WTC11 (cell line): ENCODE measurements at regions of chr9 and their contacts with region 1.

Region 1: DNA sequence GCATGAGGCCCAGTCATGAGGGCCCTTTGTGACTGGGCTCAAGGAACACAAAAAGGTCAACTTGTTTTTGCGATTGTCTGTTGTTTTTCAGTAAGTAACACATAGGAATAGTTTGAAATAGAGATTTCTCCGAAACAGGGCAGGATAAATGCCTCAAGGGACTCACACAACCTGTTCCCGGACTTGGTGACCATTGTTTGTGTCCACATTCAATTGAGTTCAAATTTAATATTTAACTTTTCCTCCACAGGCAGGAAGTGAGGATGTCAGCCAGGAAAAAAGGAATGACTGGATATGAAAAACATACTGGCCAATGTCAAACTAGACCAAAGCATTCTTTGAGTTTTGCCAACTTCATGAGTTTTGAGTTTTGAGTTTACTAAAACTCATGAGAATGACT is 72.7 kb downstream of the SPATA31C2 start:
- DNase-seq: no peak
- ATAC-seq: no peak
- H3K4me3 Mint-ChIP-seq: no peak overlapping the region
- H3K27ac Mint-ChIP-seq: no peak overlapping the region
- H3K4me1 Mint-ChIP-seq: peaks cover 17% of the 10 kb centered on the region
- H3K27me3 Mint-ChIP-seq: peaks cover 4% of the 10 kb centered on the region
- CTCF ChIP-seq: no peak

Region 2: DNA sequence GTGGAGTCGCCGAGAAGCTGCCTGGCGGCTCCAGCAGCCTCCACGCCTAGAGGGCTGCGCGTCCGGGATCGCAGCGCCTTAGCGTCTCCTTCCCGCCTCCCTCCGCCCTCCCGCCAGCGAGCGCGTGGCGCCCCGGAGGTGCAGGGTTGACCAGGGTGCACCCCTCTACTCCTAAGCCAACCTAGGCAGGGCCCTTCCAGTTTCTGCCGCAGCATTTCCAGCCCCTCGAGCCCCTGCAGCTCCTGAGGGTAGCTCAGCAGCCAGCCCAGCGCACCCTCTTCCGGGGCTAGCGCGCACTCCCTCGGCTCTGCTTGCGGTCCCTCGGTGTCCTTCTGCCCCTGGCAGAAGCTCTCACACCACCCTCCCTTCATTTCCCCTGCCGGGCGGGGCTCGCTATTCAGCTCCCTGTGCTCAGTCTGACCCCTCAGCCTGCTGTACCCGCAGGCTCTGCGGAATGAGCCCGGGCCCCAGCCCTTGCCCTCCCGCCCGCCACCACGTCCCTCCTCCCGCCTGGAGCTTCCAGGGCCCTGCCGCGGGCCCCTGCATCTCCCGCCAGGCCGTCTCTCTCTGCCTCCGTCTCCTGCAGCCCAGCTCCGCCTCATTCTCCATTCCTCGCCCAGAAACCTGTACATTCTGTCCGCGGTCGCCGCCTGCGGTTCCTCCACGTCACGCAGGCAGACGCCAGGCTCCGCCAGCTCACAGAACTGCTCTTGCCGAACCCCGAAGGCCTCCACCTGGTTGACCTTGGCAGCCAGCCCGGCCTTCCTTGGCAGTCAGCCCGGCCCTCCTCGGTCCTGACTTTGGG is 10.9 kb after region 1 on chr9:
- CTCF ChIA-PET with region 1: interaction called, 10 read pairs
- POLR2A ChIA-PET with region 1: interaction called, 3 read pairs
- DNase-seq: peak; percentile 71
- ATAC-seq: peak; percentile 86
- H3K4me3 Mint-ChIP-seq: peak overlapping the region; percentile 75
- H3K27ac Mint-ChIP-seq: no peak overlapping the region
- H3K4me1 Mint-ChIP-seq: peaks cover 32% of the 10 kb centered on the region
- H3K27me3 Mint-ChIP-seq: peaks cover 61% of the 10 kb centered on the region
- CTCF ChIP-seq: no peak